Activated B cell treated with CpG ODN at 0.5 μM for 24 hours (primary cell): ENCODE measurements at regions of chr7 and their contacts with region 1.

Region 1: GRCh38 chr7:98168181-98168905 is 42.9 kb upstream of the BHLHA15 start:
- DNase-seq: peak; percentile 34
- ATAC-seq: peak; percentile 66
- H3K4me3 Mint-ChIP-seq: no peak overlapping the region
- H3K27ac Mint-ChIP-seq: no peak overlapping the region
- H3K4me1 Mint-ChIP-seq: peaks cover 10% of the 10 kb centered on the region
- H3K27me3 Mint-ChIP-seq: peaks cover 2% of the 10 kb centered on the region
- CTCF ChIP-seq: peak; percentile 56

Region 2: GRCh38 chr7:97104719-97105238 is 1063.6 kb before region 1 on chr7:
- CTCF ChIA-PET with region 1: interaction called, 4 read pairs
- POLR2A ChIA-PET with region 1: no interaction called
- intact Hi-C with region 1: loop called (anchors 2 kb)
- DNase-seq: peak; percentile 74
- ATAC-seq: peak; percentile 94
- H3K4me3 Mint-ChIP-seq: no peak overlapping the region
- H3K27ac Mint-ChIP-seq: no peak overlapping the region
- H3K4me1 Mint-ChIP-seq: no peaks in the 10 kb centered on the region
- H3K27me3 Mint-ChIP-seq: peaks cover 16% of the 10 kb centered on the region
- CTCF ChIP-seq: peak; percentile 72

Region 3: GRCh38 chr7:97872025-97872669 is 296.2 kb before region 1 on chr7 and contains the start of gene ASNS:
- CTCF ChIA-PET with region 1: no interaction called
- POLR2A ChIA-PET with region 1: no interaction called
- intact Hi-C with region 1: loop called (anchors 2 kb)
- DNase-seq: peak; percentile 86
- ATAC-seq: peak; percentile 92
- H3K4me3 Mint-ChIP-seq: peak within 1 kb of the TSS; percentile 89
- H3K27ac Mint-ChIP-seq: peak within 1 kb of the TSS; percentile 90
- H3K4me1 Mint-ChIP-seq: peaks cover 13% of the 10 kb centered on the region
- H3K27me3 Mint-ChIP-seq: no peaks in the 10 kb centered on the region
- CTCF ChIP-seq: no peak
- total RNA-seq, gene ASNS: 92.1 and 101 TPM in 2 replicates

Region 4: DNA sequence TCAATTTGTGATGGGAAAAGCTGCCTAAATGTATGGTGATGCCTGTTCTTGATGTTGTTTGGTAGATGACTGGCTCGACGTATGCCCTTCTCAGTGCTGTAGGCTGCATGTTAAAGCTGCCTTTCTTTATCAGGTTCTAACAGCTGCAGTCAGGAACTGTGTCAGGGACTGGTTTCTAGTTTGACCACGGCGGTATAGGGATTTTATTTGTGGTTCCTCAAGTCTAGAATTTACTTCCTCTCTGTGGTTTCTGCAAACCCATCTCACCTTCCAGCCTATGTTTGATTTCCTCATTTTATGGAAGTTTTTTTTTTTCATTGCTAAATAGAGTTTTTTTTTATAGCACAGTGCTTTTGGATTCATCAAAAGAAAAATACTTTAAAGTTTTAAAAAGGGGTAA is 35.2 kb before region 1 on chr7:
- CTCF ChIA-PET with region 1: interaction called, 5 read pairs
- POLR2A ChIA-PET with region 1: no interaction called
- intact Hi-C with region 1: loop called (anchors 2 kb)
- DNase-seq: no peak
- ATAC-seq: peak; percentile 70
- H3K4me3 Mint-ChIP-seq: peak overlapping the region; percentile 50
- H3K27ac Mint-ChIP-seq: no peak overlapping the region
- H3K4me1 Mint-ChIP-seq: peaks cover 72% of the 10 kb centered on the region
- H3K27me3 Mint-ChIP-seq: peaks cover 49% of the 10 kb centered on the region
- CTCF ChIP-seq: no peak

Region 5: DNA sequence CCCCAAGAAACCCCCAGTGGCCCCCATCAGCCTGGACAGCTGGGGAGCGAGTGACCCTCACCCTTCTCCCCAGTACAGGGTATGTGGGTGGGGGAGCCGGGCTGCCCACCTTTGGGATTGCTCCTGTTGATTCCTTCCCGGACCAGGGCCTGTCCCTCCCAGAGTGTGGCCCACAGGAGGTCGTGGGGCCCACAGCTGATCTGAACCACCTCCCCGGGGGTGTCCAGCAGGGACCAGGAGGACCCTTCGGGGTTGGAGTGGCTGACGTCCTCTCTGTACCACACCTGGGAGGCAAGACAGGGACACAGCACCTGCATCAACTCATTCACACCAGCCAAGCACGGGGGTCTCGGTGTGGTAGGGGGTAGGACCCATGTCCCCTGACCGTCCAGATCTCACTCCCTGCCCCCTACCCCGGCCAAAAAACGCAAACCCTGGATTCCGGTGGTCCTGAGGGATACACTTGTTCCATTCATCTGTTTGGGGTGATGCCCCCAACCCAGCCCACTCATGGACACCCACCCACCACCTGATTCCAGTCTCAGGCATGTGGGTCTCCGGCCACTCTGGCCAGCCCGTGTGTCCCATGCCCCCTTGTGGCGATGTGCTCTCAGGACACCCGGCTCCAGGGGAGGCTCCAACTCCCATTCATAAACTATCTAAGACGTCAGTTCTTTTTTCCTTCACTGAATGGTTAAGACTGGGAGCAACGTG is 72.8 kb after region 1 on chr7:
- CTCF ChIA-PET with region 1: interaction called, 5 read pairs
- POLR2A ChIA-PET with region 1: no interaction called
- intact Hi-C with region 1: loop called (anchors 1 kb)
- DNase-seq: no peak
- ATAC-seq: peak; percentile 71
- H3K4me3 Mint-ChIP-seq: no peak overlapping the region
- H3K27ac Mint-ChIP-seq: no peak overlapping the region
- H3K4me1 Mint-ChIP-seq: no peaks in the 10 kb centered on the region
- H3K27me3 Mint-ChIP-seq: no peaks in the 10 kb centered on the region
- CTCF ChIP-seq: no peak